Spleen (tissue), 13 donors: ENCODE measurements at regions of chr10 and their contacts with region 1.

Region 1: GRCh38 chr10:122953827-122954730 is at the start of gene C10orf88:
- DNase-seq: peak; percentile 98
- H3K4me3 ChIP-seq: peak within 1 kb of the TSS; percentile 68 to 93 (median 72)
- H3K27ac ChIP-seq: peak within 1 kb of the TSS; percentile 48 to 91 (median 82)
- H3K4me1 ChIP-seq: peaks cover 11 to 38% (median 28%) of the 10 kb centered on the region in 6 donors
- H3K27me3 ChIP-seq: no peaks in the 10 kb centered on the region
- CTCF ChIP-seq: peak in 2 of 11 experiments; percentile 16 to 28
- POLR2A ChIP-seq: no peak
- total RNA-seq, gene C10orf88: 6.6 to 10.2 (median 8.8) TPM

Region 2: DNA sequence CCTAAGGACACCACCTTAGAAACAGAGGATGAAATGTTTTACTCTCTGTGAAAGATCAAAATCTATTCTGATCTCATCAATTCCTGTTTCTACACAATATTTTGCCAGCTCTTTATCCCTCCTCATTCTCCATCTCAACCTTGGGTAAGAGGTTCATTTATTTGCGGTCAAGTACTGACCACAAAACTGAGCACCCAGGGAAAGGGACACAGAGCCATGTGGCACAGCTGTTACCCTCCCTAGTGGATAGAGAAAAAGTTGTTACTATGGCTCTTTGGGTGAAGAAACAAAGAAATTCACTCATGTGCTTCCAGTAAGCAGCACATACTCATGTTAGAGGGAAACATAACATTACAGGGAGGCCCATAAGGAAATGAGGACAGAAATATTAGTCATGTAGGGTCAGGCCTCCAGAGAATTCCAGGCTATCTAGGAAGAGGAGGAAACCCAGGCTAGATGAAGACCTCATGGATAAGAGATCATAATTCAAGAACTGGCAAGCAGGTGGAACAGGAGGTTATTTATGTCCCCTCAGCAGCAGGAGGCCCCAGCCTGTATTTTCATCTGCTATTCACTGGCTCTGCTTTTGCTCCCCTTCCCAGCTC is 1140.8 kb before region 1 on chr10:
- intact Hi-C with region 1: no loop called
- DNase-seq: no peak
- H3K4me3 ChIP-seq: no peak overlapping the region
- H3K27ac ChIP-seq: no peak overlapping the region
- H3K4me1 ChIP-seq: no peaks in the 10 kb centered on the region
- H3K27me3 ChIP-seq: no peaks in the 10 kb centered on the region
- CTCF ChIP-seq: no peak
- POLR2A ChIP-seq: no peak

Region 3: GRCh38 chr10:123154092-123154921 is 200.2 kb after region 1 on chr10 and contains the start of gene BUB3:
- intact Hi-C with region 1: loop called (anchors 10 kb)
- DNase-seq: peak; percentile 98
- H3K4me3 ChIP-seq: peak within 1 kb of the TSS; percentile 88 to 97 (median 94)
- H3K27ac ChIP-seq: peak within 1 kb of the TSS; percentile 91 to 97 (median 95)
- H3K4me1 ChIP-seq: peaks cover 38 to 77% (median 71%) of the 10 kb centered on the region in 6 donors
- H3K27me3 ChIP-seq: peaks cover 17 to 42% (median 36%) of the 10 kb centered on the region in 7 donors
- CTCF ChIP-seq: peak in 9 of 11 experiments; percentile 28 to 69 (median 49)
- POLR2A ChIP-seq: peak in 2 of 3 donors; percentile 68 to 72
- total RNA-seq, gene BUB3: 94.2 to 193 (median 111) TPM